Activated naive CD4-positive, alpha-beta T cell treated with anti-CD3 and anti-CD28 coated beads for 36 hours (primary cell): ENCODE measurements at regions of chr5 and their contacts with region 1.

Region 1: GRCh38 chr5:127517480-127518318 is at the start of gene PRRC1:
- DNase-seq: peak; percentile 83
- H3K4me3 Mint-ChIP-seq: peak within 1 kb of the TSS; percentile 81
- H3K27ac Mint-ChIP-seq: peak within 1 kb of the TSS; percentile 63
- H3K4me1 Mint-ChIP-seq: peaks cover 31% of the 10 kb centered on the region
- H3K27me3 Mint-ChIP-seq: no peaks in the 10 kb centered on the region
- total RNA-seq, gene PRRC1: 34.1 to 35.1 TPM

Region 2: DNA sequence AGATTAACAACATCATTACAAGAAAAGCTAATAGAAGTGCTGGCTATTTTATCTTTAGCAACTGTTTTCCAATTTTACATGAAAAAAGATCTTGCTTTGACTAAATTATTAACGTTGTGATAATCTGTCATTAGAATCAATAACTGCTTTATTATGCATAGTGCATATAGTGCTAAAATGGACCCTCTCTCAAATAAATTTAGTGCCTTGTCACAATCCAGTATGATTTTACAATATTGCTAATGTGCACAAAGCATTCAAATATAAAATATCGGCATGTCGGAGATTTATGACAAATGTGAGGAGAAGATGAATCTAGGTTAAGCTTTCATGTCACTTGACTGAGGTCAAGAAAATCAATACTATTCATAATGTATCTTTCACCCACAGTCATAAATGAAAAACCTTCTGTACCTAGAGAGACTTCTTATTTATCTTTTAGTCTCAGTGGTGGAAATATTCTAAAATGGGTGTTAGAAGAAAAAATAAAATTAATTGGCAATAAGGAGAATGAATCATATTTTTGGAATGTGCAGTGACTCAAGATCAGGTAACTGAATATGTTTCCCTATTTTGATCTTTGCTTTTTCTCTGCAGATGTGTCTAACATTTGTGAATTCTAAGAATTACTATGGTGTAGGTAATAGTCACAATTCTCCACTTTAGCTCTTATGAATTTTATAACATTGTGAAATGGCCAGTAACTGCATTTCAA is 1767.4 kb before region 1 on chr5:
- CTCF ChIA-PET with region 1: no interaction called
- intact Hi-C with region 1: no loop called
- DNase-seq: no peak
- H3K4me3 Mint-ChIP-seq: no peak overlapping the region
- H3K27ac Mint-ChIP-seq: no peak overlapping the region
- H3K4me1 Mint-ChIP-seq: no peaks in the 10 kb centered on the region
- H3K27me3 Mint-ChIP-seq: no peaks in the 10 kb centered on the region

Region 3: DNA sequence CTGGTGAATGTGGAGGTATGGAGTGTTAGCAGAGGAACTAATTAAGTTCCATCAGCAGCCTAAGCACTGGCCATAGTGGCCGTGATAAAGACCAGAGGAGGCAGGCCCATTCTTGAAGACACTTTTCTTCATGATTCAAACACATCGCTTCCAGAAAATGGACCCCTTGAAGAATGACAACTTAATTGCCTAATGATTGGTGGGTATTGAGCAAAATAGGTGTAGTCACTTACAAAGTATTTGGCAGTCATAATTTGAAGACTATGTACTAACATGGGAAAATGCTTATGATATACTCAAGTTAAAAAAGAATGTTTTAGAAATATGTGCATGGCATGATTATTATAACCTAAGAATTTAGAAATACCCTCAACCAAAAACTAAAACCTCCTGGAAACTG is 182.3 kb before region 1 on chr5:
- CTCF ChIA-PET with region 1: no interaction called
- intact Hi-C with region 1: no loop called
- DNase-seq: no peak
- H3K4me3 Mint-ChIP-seq: no peak overlapping the region
- H3K27ac Mint-ChIP-seq: no peak overlapping the region
- H3K4me1 Mint-ChIP-seq: no peaks in the 10 kb centered on the region
- H3K27me3 Mint-ChIP-seq: peaks cover 24% of the 10 kb centered on the region

Region 4: GRCh38 chr5:127536687-127537086 is 19.0 kb after region 1 on chr5:
- CTCF ChIA-PET with region 1: interaction called, 7 read pairs
- intact Hi-C with region 1: loop called (anchors 2 kb)
- DNase-seq: no peak
- H3K4me3 Mint-ChIP-seq: no peak overlapping the region
- H3K27ac Mint-ChIP-seq: no peak overlapping the region
- H3K4me1 Mint-ChIP-seq: peaks cover 2% of the 10 kb centered on the region
- H3K27me3 Mint-ChIP-seq: no peaks in the 10 kb centered on the region

Region 5: DNA sequence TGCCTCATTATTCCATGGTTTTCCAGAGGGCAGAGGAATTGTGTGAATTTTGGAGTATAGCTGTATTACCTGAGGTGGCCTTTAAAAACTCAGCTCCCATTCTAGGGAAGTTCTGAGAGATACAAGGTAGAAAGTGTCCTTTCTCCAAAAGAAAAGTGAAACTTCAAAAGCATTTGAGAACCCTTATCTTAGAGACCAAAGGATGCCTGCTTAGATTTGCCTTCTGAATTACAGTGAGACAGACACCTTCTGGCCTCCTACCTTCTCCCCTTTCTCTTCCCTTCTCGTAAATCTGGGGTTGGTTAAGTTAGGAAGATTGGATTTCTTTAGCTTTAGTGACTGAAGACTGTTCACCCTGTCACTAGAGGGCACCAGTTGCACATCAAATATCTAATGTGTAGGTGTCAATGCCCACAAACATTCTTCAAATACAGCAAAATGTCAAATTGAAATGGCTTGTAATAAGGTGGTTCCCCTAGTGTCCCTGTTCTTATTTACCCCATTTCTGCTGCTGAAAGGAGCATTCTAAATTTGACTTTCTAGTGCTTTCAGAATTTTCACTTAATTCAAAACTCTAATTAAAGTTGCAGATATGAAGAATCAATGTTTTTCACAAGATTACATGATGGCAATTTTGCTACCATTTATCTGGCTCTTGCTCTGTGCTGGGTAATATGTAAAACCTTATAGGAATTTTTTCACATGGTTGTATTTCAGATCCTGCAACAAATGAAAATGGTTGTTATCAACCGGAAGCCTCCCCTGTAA is 46.5 kb after region 1 on chr5:
- CTCF ChIA-PET with region 1: no interaction called
- intact Hi-C with region 1: no loop called
- DNase-seq: peak; percentile 69
- H3K4me3 Mint-ChIP-seq: no peak overlapping the region
- H3K27ac Mint-ChIP-seq: no peak overlapping the region
- H3K4me1 Mint-ChIP-seq: peaks cover 7% of the 10 kb centered on the region
- H3K27me3 Mint-ChIP-seq: peaks cover 12% of the 10 kb centered on the region

Region 6: DNA sequence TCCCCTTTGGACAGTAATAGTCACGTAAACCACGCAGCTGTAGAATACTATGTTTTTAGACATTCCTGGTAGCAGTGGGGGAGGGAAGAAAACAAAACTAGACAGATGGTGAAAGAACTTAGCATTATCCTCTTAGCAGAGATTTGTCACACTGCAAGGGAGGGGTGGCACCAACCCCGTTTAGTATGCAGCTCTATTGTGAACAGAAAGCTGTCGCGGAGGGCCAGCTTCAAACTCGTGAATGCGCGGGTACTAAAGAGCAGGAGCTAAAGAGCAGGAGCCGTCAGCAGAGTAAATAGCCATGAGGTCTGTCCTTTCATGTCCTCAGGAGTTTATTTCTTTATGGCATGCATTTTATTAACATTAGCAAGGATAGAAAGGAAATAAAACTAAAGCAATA is 423.9 kb after region 1 on chr5:
- CTCF ChIA-PET with region 1: no interaction called
- intact Hi-C with region 1: no loop called
- DNase-seq: peak; percentile 10
- H3K4me3 Mint-ChIP-seq: no peak overlapping the region
- H3K27ac Mint-ChIP-seq: no peak overlapping the region
- H3K4me1 Mint-ChIP-seq: peaks cover 9% of the 10 kb centered on the region
- H3K27me3 Mint-ChIP-seq: no peaks in the 10 kb centered on the region